ENCODE measurements at regions of chr12 and their contacts with region 1.

Region 1: GRCh38 chr12:738712-739111 is 13.7 kb upstream of the WNK1 start:
- DNase-seq: no peak
- H3K4me3 Mint-ChIP-seq: no peak overlapping the region
- H3K27ac Mint-ChIP-seq: no peak overlapping the region
- H3K4me1 Mint-ChIP-seq: peaks cover 21% of the 10 kb centered on the region
- H3K27me3 Mint-ChIP-seq: no peaks in the 10 kb centered on the region

Region 2: DNA sequence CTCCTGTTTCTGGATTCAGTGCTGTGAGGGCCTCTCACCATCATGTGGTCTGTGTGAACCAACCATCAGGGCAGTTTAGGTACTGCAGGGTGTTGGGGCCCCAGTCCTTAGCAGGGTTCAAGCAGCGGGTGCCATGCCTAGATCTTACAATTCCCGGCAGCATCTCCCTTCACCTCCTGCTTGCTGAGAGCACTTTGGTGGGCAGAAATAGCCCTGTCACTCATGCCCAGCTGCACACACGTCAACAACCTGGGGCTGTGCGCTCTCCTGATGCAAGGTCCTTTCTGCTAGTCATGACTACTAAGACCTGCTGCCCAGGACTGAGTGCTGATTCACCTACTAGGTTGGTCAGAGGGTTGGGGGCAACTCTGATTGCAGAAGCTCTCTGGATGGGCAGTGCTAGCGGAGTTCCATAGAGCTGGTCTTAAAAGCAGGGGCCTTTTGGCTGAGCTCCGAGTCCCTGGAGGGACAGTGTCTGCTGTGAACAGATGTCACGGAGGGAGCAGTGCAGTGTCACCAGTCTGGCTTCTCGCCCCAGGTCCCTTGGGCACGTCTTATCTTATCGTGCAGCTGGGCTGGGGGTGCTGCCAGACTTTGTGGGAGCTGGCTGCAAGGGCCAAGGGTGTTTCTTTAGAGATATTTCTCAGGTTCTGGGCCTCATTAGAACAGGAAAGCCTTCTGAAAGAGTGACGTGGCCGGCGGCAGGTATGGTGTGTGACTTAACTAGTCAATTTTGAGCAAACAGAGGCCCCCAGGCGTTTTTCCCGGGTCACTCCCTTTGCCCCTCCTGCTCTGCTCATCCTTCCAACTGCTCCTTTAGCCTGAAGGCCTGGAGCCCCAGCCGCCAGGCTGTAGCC is 147.3 kb before region 1 on chr12:
- intact Hi-C with region 1: no loop called
- DNase-seq: no peak
- H3K4me3 Mint-ChIP-seq: no peak overlapping the region
- H3K27ac Mint-ChIP-seq: no peak overlapping the region
- H3K4me1 Mint-ChIP-seq: peaks cover 4% of the 10 kb centered on the region
- H3K27me3 Mint-ChIP-seq: peaks cover 6% of the 10 kb centered on the region

Region 3: DNA sequence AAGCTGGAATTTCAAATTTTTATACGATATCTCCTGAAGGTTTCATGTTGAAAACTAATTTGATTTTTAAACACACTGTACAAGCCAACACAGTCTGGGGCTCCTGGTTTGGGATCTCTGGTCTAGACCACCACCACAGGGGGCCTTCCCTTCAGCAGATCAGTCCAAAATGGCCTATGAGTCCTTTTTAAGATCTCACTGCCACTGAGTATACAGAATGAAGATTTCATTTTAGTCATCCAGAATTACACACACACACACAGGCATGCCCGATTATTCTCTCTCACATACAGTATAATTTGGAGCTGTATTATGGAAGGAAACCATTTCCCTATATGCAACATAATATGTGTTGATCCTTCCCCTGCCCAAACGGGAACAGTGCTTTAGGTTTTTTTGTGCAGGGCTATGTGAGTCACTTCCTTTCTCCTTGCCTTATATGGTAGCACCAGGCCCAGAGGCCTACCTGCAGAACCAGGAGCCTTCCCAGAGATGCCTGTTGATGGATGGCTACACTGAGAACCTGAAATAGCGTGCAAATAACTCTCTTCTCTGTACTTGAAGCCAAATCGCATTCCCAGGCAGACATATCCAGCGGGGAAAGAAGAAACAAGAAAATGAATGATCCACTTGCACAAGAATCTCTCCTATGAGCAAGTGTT is 14.4 kb before region 1 on chr12:
- intact Hi-C with region 1: loop called (anchors 1 kb)
- DNase-seq: no peak
- H3K4me3 Mint-ChIP-seq: no peak overlapping the region
- H3K27ac Mint-ChIP-seq: peak overlapping the region; percentile 47
- H3K4me1 Mint-ChIP-seq: peaks cover 51% of the 10 kb centered on the region
- H3K27me3 Mint-ChIP-seq: no peaks in the 10 kb centered on the region

Region 4: DNA sequence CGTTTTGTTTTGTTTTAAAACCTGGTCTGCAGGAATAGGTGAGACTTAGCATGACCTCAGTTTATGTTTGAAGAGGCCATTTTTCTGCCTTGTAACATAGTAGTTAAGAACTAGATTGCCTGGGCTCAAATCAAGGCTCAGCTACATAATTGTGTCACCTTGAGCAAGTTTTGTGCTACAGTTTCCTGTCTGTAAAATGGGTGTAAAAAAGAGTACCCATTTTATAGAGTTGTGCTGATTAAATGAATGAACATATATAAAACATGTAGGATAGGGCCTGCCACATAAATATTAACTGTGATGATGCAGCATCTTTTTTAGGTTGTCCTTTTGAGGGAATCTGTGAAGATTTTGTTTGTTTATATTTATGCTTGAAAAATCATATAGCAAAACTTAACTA is 20.9 kb after region 1 on chr12:
- intact Hi-C with region 1: no loop called
- DNase-seq: no peak
- H3K4me3 Mint-ChIP-seq: no peak overlapping the region
- H3K27ac Mint-ChIP-seq: peak overlapping the region; percentile 17
- H3K4me1 Mint-ChIP-seq: peaks cover 42% of the 10 kb centered on the region
- H3K27me3 Mint-ChIP-seq: no peaks in the 10 kb centered on the region

Region 5: GRCh38 chr12:795305-795704 is 56.6 kb after region 1 on chr12:
- intact Hi-C with region 1: loop called (anchors 1 kb)
- DNase-seq: peak; percentile 51
- H3K4me3 Mint-ChIP-seq: peak overlapping the region; percentile 48
- H3K27ac Mint-ChIP-seq: peak overlapping the region; percentile 94
- H3K4me1 Mint-ChIP-seq: peaks cover 58% of the 10 kb centered on the region
- H3K27me3 Mint-ChIP-seq: no peaks in the 10 kb centered on the region

Measured in activated T-helper 2 cell treated with anti-CD3 and anti-CD28 coated beads, Interferon-gamma antibody, Interleukin-2, Interleukin-4, amounts not matched to agents 10 μg/mL and 5 μg/mL and 100 μg/mL, durations not matched to agents 14 hours and 24 hours and 36 hours (primary cell).